Activated T-helper 1 cell treated with anti-CD3 and anti-CD28 coated beads, Interleukin-12 subunit alpha, Interleukin-12 subunit beta, Interleukin-2, Interleukin-4 antibody, amounts not matched to agents 30 ng/mL and 10 ng/mL and 1 ng/mL, durations not matched to agents 14 hours and 24 hours and 36 hours (primary cell): ENCODE measurements at regions of chr22 and their contacts with region 1.

Region 1: GRCh38 chr22:45577746-45578523 is 75.3 kb downstream of the FBLN1 start:
- DNase-seq: peak; percentile 53
- H3K4me3 Mint-ChIP-seq: no peak overlapping the region
- H3K27ac Mint-ChIP-seq: no peak overlapping the region
- H3K4me1 Mint-ChIP-seq: no peaks in the 10 kb centered on the region
- H3K27me3 Mint-ChIP-seq: peaks cover 12% of the 10 kb centered on the region

Region 2: GRCh38 chr22:45526768-45527360 is 51.1 kb before region 1 on chr22:
- intact Hi-C with region 1: no loop called
- DNase-seq: no peak
- H3K4me3 Mint-ChIP-seq: no peak overlapping the region
- H3K27ac Mint-ChIP-seq: no peak overlapping the region
- H3K4me1 Mint-ChIP-seq: no peaks in the 10 kb centered on the region
- H3K27me3 Mint-ChIP-seq: no peaks in the 10 kb centered on the region

Region 3: GRCh38 chr22:45645526-45646414 is 67.8 kb after region 1 on chr22:
- intact Hi-C with region 1: loop called (anchors 2 kb)
- DNase-seq: peak; percentile 70
- H3K4me3 Mint-ChIP-seq: no peak overlapping the region
- H3K27ac Mint-ChIP-seq: peak overlapping the region; percentile 35
- H3K4me1 Mint-ChIP-seq: peaks cover 10% of the 10 kb centered on the region
- H3K27me3 Mint-ChIP-seq: peaks cover 37% of the 10 kb centered on the region

Region 4: DNA sequence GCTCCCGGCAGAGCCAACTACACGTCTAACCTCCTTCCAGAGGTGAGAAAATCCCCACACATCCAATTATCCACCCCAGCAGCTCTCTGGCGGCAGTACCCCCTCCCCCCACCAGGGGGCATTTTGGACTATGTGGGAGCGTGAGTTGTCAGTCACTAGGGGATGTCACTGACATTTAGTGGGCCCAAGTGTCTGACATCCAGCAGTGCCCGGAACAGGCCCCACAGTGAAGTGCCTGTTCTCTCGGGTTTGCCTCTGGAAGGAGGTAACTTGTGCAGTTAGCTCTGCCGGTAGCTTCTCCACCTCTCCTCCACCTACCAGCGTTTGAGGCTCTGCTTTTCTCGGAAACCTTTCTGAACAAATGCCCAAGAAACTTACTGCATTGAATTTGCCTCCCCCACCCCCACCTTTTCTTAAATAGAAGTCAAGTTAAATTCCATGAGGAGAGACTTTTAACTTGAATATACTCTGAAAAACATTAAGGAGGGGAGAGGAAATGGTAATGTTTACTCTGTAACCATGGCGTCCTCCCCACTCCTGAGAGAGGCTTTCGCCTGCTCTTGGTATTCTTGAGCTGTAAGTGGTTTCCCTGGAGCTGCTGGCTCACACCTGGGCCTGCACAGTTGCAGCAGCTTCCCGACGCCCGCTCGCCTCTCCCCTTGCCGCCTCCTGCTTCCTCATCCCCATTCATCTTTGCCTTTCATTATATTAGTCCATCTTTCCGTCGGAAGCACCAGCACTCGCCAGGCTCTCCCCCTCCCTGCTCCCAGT is 286.2 kb after region 1 on chr22:
- intact Hi-C with region 1: loop called (anchors 2 kb)
- DNase-seq: peak; percentile 51
- H3K4me3 Mint-ChIP-seq: no peak overlapping the region
- H3K27ac Mint-ChIP-seq: no peak overlapping the region
- H3K4me1 Mint-ChIP-seq: peaks cover 8% of the 10 kb centered on the region
- H3K27me3 Mint-ChIP-seq: peaks cover 24% of the 10 kb centered on the region

Region 5: GRCh38 chr22:46108564-46109473 is 530.9 kb after region 1 on chr22:
- intact Hi-C with region 1: loop called (anchors 10 kb)
- DNase-seq: no peak
- H3K4me3 Mint-ChIP-seq: no peak overlapping the region
- H3K27ac Mint-ChIP-seq: no peak overlapping the region
- H3K4me1 Mint-ChIP-seq: no peaks in the 10 kb centered on the region
- H3K27me3 Mint-ChIP-seq: no peaks in the 10 kb centered on the region